ENCODE measurements at regions of chr13 and their contacts with region 1.

Region 1: GRCh38 chr13:19695829-19696228 is 62.4 kb downstream of the MPHOSPH8 start:
- DNase-seq: no peak
- ATAC-seq: no peak
- H3K4me3 Mint-ChIP-seq: no peak overlapping the region
- H3K27ac Mint-ChIP-seq: no peak overlapping the region
- H3K4me1 Mint-ChIP-seq: no peaks in the 10 kb centered on the region
- H3K27me3 Mint-ChIP-seq: no peaks in the 10 kb centered on the region
- CTCF ChIP-seq: no peak

Region 2: DNA sequence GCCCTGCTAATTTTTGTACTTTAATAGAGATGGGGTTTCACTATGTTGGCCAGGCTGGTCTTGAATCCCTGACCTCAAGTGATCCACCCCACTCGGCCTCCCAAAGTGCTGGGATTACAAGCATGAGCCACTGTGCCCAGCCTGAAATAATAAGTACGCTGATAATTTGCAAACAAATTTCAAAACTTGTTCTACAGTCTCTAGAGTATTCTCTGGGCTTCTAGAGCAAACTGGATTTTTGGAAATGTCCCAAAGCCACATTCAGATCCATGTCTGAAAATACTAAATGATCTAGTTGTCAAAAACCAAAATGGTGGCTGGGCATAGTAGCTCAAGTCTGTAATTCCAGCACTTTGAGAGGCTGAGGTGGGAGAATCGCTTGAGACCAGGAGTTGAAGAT is 126.8 kb after region 1 on chr13:
- CTCF ChIA-PET with region 1: no interaction called
- POLR2A ChIA-PET with region 1: interaction called, 13 read pairs
- intact Hi-C with region 1: no loop called
- DNase-seq: no peak
- ATAC-seq: no peak
- H3K4me3 Mint-ChIP-seq: no peak overlapping the region
- H3K27ac Mint-ChIP-seq: no peak overlapping the region
- H3K4me1 Mint-ChIP-seq: no peaks in the 10 kb centered on the region
- H3K27me3 Mint-ChIP-seq: no peaks in the 10 kb centered on the region
- CTCF ChIP-seq: no peak